ENCODE measurements at regions of chr5 and their contacts with region 1.

Region 1: DNA sequence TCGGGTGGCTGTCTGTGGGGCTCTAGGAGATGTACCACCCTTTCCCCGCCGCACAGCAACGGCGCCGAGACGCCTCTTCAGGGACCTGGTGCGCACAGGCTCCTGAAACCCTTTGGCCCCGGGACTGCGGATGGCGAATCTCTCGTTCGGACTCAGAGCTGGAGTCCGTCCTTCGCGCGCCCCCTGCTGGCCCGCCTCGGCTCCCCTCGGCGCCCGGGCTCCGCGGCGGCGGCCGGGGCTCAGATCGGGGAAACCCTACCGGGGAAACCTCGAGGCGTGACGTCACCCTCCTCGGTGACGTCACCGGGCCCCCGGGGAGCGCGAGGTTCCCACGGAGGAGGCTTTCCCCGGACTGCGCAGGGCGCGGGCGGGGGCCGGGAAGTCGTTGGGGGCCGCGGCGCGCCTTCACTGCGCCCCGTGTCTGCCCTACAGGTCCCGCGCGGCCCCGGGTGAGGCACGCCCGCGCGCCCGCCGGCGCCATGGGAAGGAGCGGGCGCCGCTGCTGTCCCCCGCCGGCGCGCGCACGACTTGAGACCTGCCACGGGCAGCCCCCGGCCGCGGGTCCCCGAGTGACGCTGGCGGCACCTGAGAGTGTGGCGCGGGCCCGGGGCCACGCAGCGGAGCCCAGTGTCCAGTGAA is 7.9 kb downstream of the PRR7 start:
- DNase-seq: peak; percentile 74 to 96 (median 90)

Region 2: DNA sequence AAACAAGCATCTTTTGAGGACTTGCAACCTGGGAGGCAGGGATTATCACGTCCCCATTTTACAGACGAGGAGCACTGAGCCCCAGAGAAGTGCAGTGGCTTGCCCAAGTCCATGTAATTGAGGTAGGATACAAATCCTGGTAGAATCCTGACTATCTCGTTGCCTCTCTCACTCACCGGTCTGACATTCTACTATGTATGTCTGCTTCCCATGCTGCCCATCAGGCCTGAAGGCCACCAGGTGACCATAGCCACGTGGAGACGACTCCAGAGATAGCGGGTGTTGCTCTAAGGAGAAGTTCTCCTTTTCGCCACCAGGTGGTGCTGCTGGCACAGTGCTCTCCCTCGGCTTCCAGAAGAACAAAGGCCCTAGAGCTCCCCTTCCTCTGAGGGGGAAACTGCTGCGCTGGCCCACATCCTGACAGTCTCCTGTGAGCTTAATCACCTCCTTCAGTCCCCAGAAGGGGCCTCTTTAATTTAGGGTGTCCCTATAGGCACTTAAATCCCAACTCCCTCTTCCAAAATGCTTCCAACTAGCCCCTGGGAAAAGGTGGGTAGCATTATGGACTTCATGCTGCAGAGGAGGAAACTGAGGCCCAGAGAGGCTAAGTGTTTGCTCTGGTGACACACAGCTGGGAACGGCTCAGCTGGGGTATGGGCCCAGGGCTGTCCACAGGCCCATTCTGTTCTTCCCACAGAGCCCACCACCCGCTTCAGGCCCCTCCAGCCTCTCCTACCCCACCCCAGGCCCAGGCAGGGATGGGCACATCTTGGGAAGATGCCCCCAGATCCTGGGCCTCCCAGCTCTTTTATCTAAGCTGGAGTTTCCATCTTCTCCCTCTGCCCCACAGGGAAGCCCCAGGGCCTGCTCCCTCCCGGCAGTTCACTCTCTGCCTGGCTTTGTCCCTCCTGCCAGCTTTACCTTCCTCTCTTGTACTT is 63.9 kb before region 1 on chr5:
- intact Hi-C with region 1: loop called (anchors 5 kb)
- DNase-seq: peak in 41 of 42 donors; percentile 71 to 95 (median 84)

Region 3: DNA sequence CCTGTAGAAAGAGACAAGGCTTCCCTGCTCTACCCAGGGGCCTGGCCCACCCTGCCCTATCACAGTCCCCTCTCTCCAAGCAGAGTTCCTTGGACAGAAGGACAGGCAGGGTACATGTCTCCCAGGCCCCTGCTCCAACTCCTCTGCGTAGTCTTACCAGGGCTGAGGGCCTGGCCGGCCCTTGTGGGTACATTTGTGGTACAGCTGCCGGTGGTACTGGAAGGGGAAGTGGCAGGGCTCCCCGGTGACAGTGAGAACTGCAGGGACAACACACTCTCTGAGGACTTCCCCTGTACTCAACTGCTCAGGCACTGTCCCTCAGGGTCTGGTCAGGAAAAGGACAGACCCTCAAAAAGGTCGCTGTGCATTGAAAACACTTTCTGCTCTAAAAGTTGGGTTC is 48.7 kb before region 1 on chr5:
- intact Hi-C with region 1: loop called (anchors 5 kb)
- DNase-seq: peak in 5 of 42 donors; percentile 12 to 43 (median 39)

Region 4: DNA sequence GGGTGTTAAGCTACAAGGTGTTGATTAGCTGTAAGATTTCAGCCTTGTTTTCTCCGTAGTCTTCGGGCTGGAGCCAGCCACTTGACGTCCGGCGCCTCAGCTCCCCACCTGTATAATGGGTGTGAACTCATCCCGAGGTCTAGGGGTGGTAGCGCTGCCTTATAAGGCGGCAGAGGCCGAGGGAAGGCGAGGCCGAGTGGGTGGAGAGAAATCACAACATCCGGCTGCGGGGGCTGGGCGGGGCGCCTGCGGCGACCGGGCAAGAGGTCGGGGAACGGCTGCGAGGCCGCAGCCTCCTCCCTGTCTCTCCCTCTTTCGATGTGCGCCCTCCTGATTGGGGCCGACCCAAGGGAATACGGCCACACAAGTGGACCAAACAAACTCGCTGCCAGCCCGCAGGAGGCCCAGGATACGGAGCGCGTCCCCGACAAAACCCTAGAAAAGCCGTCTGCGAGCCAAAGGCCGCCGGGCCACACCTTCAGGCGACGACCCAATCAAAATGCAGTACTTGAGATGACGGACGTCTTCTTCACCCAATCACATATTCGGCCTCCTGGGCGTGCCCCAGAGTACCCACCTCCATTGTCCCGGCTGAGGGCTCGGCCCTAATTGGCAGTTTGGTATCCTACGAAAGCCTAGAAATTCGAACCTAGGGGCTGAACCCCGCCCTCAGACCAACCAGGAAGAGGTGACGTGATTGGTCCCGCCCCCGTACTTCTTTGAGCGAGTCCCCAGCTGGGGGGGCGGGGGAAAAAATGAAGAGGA is 28.5 kb before region 1 on chr5:
- intact Hi-C with region 1: loop called (anchors 2 kb)
- DNase-seq: peak; percentile 98 to 100 (median 100)

Region 5: DNA sequence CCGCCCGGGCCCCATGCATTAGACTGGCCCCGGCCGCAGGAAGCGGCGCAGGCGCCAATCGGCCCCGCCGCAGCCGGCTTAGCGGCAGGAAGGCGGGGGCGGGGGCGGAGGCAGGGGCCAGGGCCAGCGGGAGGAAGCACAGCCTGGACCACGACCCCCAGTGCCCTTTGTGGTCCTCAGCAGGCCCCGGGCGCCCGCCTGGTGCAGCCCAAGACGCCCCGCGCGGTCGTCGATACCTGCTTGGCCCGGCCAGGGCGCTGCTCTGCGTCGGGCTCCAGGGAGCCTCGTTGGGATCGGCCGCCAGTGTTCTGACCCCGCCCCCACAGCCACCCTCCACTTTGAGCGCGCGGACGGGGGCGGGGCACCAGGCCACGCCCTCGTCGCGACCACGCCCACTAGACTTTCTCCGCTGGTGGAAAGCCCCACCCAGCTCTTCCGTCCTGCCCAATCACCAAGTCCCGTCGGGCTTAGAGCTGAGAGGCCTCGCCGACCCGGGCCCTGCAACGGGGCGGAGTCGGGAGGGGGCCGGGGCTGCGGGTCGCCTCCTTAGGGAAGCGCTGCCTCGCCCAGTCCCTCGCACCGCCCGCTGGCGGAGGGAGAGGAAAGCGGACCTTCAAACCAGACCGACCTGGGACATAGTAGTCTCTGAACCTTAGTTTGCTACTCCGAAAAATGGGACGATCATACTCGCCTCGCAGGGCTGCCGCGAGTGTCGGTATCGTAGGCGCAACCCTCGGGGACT is 42.9 kb after region 1 on chr5 and contains the start of gene PDLIM7:
- intact Hi-C with region 1: loop called (anchors 5 kb)
- DNase-seq: peak; percentile 76 to 97 (median 90)

Measured in head of caudate nucleus (tissue), 42 donors.